OCI-LY7 (cell line): ENCODE measurements at regions of chr18 and their contacts with region 1.

Region 1: GRCh38 chr18:48675352-48675761 is 136.5 kb downstream of the CTIF start:
- DNase-seq: peak; percentile 75
- H3K4me3 ChIP-seq: no peak overlapping the region
- H3K27ac ChIP-seq: no peak overlapping the region
- H3K4me1 ChIP-seq: peaks cover 34% of the 10 kb centered on the region
- CTCF ChIP-seq: peak; percentile 77

Region 2: GRCh38 chr18:48767090-48767690 is 91.8 kb after region 1 on chr18:
- CTCF ChIA-PET with region 1: no interaction called
- POLR2A ChIA-PET with region 1: no interaction called
- intact Hi-C with region 1: loop called (anchors 5 kb)
- DNase-seq: no peak
- H3K4me3 ChIP-seq: no peak overlapping the region
- H3K27ac ChIP-seq: no peak overlapping the region
- H3K4me1 ChIP-seq: no peaks in the 10 kb centered on the region
- CTCF ChIP-seq: no peak

Region 3: DNA sequence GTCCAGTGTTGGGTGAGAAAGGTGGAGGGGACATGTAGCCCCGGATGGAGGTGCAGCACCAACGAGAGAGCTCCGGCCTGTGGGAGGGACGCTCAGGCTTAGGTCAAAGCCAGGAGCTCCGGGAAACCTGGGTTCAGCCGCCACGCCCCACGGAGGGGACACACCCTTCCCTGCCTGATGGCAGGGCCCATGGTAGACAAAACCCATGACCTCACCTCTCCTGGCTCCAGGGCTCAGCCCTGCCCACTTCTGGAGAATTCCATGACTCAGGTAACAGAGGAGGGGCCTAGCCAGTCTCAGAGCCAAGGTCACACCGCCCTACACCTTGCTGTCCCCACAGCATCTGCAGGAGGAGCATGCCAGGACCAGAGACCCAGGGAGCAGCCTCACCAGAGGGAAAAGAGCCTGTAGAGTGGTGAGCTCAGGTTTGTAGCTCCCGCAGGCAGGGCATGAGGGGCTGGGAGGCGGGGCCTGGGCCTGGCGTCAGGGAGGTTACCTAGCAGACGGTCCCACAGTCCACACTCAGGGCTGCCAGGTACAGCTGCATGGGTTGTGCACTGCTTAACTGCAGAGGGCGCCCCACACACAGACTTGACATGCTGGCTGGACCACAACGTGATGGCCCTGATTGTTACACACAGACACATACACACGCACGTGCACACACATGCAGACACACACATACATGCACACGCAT is 346.2 kb after region 1 on chr18:
- CTCF ChIA-PET with region 1: no interaction called
- POLR2A ChIA-PET with region 1: no interaction called
- intact Hi-C with region 1: loop called (anchors 5 kb)
- DNase-seq: peak; percentile 88
- H3K4me3 ChIP-seq: peak overlapping the region; percentile 43
- H3K27ac ChIP-seq: peak overlapping the region; percentile 95
- H3K4me1 ChIP-seq: peaks cover 73% of the 10 kb centered on the region
- CTCF ChIP-seq: peak; percentile 76

Region 4: DNA sequence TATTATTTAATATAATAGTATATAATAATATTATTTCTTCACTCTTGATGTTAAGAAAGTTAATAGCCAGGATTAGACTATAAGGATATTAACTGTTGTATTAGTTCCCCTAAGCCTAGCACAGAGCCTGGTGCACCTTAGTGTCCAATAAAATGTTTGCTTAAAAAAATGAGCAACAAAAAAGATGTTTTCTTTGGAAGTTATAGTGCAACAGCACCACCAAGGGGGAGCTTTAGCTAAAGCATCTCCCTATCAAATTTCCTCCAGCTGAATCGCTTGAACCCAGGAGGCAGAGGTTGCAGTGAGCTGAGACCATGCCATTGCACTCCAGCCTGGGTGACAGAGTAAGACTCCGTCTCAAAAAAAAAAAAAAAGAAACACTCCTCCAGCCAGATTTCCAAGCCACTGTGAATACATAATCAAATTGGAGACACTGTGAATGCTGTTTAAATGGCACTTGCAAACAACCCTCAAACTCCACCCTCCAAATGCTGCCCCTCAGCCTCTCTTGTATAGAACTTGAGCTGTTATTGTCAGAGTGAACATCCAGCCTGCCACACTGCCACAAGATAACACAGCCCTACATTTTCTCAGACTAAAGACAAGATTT is 563.2 kb after region 1 on chr18:
- CTCF ChIA-PET with region 1: no interaction called
- POLR2A ChIA-PET with region 1: no interaction called
- intact Hi-C with region 1: loop called (anchors 2 kb)
- DNase-seq: peak; percentile 44
- H3K4me3 ChIP-seq: no peak overlapping the region
- H3K27ac ChIP-seq: no peak overlapping the region
- H3K4me1 ChIP-seq: peaks cover 9% of the 10 kb centered on the region
- CTCF ChIP-seq: peak; percentile 69

Region 5: DNA sequence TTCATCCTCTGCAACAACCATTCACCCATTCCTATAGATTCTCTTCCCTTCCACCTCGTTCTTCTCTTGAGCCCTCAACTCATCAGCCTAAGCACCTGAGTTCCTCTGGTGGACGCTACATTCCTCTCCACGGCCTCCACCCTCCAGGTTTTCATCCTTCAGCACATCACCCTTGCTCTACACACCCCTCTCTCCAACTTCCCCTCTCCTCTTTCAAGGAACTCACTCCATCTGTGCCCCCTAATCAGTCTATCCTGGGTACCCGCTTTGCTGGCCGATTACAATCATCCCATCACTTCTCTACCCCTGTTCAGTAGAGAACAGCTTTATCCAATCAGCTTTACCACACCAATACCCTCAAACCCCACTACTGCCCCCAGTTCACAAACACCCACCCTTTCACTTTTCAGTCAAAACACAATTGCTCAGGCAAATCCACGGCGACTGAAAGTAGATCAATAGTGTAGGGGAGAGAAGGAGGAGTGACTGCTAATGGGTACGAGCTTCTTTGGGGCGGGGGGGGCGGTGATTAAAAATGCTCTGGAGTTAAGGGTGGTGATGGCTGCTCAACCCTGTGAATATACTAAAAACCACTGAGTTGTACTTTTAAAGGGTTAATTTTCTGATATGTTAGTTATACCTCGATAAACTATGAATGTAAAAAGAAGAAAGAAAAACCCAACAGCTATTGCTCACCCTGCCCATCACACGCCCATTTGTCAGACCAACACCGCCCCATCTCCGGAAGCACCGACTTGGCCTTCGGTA is 784.2 kb after region 1 on chr18:
- CTCF ChIA-PET with region 1: no interaction called
- POLR2A ChIA-PET with region 1: no interaction called
- intact Hi-C with region 1: loop called (anchors 10 kb)
- DNase-seq: peak; percentile 30
- H3K4me3 ChIP-seq: peak overlapping the region; percentile 92
- H3K27ac ChIP-seq: peak overlapping the region; percentile 51
- H3K4me1 ChIP-seq: peaks cover 36% of the 10 kb centered on the region
- CTCF ChIP-seq: no peak